ENCODE measurements at regions of chr19 and their contacts with region 1.

Region 1: GRCh38 chr19:732148-733069 is 18.5 kb upstream of the MISP start:
- DNase-seq: no peak
- H3K4me3 ChIP-seq: no peak overlapping the region
- H3K27ac ChIP-seq: no peak overlapping the region
- H3K4me1 ChIP-seq: no peaks in the 10 kb centered on the region
- H3K27me3 ChIP-seq: no peaks in the 10 kb centered on the region
- CTCF ChIP-seq: no peak

Region 2: DNA sequence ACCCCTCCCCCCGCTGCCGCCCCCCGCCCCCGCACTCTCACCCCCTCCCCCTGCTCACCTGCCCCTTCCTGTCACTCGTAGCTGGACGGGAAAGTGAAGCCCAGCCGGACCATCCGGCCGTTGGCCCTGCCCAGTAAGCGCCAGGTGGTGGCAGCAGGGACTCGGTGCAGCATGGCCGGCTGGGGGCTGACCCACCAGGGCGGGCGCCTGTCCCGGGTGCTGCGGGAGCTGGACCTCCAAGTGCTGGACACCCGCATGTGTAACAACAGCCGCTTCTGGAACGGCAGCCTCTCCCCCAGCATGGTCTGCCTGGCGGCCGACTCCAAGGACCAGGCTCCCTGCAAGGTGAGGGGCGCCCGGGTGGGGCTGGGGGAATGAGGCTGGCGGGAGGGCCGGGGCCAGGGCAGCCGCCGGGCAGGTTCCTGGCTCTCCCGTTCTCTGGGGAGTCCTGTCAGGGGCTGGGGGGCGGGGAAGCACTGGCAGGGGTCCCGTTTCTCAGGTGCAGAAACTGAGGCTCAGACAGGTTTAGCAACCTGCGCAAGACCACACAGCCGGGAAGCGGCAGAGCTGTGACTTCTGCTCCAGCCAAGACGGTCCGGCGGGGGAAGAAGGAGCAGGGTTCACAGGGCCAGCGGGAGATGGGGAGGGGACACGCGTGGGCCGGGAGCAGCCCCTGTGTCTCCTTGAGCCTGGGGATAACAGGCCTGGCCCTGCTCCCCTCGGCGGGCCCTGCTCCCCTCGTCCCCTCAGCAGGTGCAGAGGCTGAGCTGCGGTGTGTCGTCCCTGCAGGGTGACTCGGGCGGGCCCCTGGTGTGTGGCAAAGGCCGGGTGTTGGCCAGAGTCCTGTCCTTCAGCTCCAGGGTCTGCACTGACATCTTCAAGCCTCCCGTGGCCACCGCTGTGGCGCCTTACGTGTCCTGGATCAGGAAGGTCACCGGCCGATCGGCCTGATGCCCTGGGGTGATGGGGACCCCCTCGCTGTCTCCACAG is 183.3 kb before region 1 on chr19:
- CTCF ChIA-PET with region 1: no interaction called
- dilution Hi-C with region 1: no loop called
- in situ Hi-C with region 1: no loop called
- intact Hi-C with region 1: loop called (anchors 1 kb)
- DNase-seq: no peak
- H3K4me3 ChIP-seq: no peak overlapping the region
- H3K27ac ChIP-seq: no peak overlapping the region
- H3K4me1 ChIP-seq: peaks cover 3% of the 10 kb centered on the region
- H3K27me3 ChIP-seq: no peaks in the 10 kb centered on the region
- CTCF ChIP-seq: no peak

Region 3: DNA sequence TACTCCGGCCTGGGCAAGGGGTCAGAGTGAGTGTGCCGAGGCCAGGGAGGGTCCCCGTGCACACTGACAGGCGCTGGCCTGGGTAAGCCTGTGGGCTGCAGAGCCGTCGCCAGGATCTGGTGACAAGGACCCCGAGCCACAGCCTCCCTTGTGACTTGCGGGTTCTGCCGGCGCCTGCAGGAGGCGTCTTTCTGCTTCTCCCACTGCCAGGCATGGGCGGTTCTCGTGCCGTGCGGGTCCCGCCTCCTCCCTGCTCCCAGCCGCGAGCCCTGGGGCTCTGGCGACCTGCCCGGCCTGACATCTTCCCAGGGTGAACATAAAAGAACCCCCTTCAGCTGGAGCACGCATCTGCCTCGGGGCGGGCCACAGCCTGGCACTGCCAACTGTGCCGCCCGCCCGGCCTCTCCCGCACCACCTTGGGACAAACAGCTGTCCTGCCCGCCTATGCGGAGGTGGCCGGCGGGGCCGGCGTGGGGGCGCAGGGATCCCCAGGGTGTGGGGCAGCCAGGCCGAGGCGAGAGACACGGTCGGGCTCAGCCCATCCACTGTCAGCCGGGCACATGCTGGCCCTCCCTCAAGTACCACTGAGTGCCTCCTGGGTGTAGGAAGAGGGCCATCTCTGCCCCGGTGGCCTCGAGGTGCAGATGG is 144.2 kb before region 1 on chr19:
- CTCF ChIA-PET with region 1: no interaction called
- dilution Hi-C with region 1: no loop called
- in situ Hi-C with region 1: loop called in 1 of 2 experiments (anchors 25 kb)
- intact Hi-C with region 1: loop called (anchors 1 kb)
- DNase-seq: peak; percentile 75
- H3K4me3 ChIP-seq: no peak overlapping the region
- H3K27ac ChIP-seq: no peak overlapping the region
- H3K4me1 ChIP-seq: peaks cover 17% of the 10 kb centered on the region
- H3K27me3 ChIP-seq: peaks cover 14% of the 10 kb centered on the region
- CTCF ChIP-seq: peak; percentile 44 to 75

Region 4: DNA sequence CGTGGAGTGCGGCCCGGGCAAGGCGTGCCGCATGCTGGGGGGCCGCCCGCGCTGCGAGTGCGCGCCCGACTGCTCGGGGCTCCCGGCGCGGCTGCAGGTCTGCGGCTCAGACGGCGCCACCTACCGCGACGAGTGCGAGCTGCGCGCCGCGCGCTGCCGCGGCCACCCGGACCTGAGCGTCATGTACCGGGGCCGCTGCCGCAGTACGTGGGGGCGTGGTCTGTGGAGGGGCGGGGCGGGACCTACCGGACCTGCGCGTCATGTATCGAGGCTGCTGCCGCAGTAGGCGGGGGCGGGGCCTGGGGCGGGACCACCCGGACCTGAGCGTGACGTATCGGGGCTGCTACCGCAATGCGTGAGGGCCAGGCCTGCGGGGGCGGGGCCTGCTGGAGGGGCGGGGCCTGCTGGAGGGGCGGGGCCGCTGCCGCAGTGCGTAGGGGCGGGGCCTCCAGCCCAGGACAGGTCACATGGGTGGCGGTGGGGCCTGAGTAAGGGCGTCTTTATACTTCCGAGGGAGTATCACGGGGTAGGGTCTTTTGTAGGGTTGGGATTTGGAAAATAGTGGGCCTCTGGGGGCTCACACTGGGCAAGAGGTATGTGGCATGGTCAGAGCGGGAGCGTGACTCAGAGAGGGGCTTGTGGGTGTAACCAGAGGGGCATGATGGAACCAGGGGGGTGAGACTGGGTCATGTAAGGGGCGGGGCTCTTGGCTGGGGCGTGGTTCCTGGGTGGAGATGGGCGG is 52.0 kb before region 1 on chr19:
- CTCF ChIA-PET with region 1: no interaction called
- dilution Hi-C with region 1: no loop called
- in situ Hi-C with region 1: no loop called
- intact Hi-C with region 1: loop called (anchors 5 kb)
- DNase-seq: peak; percentile 96
- H3K4me3 ChIP-seq: peak overlapping the region; percentile 36 to 68 (median 54)
- H3K27ac ChIP-seq: peak overlapping the region; percentile 63
- H3K4me1 ChIP-seq: peaks cover 33% of the 10 kb centered on the region
- H3K27me3 ChIP-seq: no peaks in the 10 kb centered on the region
- CTCF ChIP-seq: peak; percentile 17 to 49

Measured in mammary epithelial cell (primary cell).